Endothelial cell of umbilical vein (primary cell): ENCODE measurements at regions of chr1 and their contacts with region 1.

Region 1: GRCh38 chr1:151008190-151008860 is at the start of gene PRUNE1:
- DNase-seq: peak; percentile 98
- H3K4me3 ChIP-seq: peak within 1 kb of the TSS; percentile 7 to 82 (median 52)
- H3K27ac ChIP-seq: peak within 1 kb of the TSS; percentile 88
- H3K4me1 ChIP-seq: peaks cover 28% of the 10 kb centered on the region
- H3K27me3 ChIP-seq: no peaks in the 10 kb centered on the region
- CTCF ChIP-seq: no peak
- POLR2A ChIP-seq: no peak
- total RNA-seq, gene PRUNE1: 8.0 and 8.6 TPM in 2 replicates

Region 2: GRCh38 chr1:150979092-150980056 is 29.0 kb before region 1 on chr1:
- CTCF ChIA-PET with region 1: interaction called, 278 read pairs
- POLR2A ChIA-PET with region 1: interaction called, 3 read pairs
- dilution Hi-C with region 1: no loop called
- intact Hi-C with region 1: loop called (anchors 1 kb)
- DNase-seq: peak; percentile 91
- H3K4me3 ChIP-seq: no peak overlapping the region
- H3K27ac ChIP-seq: no peak overlapping the region
- H3K4me1 ChIP-seq: peaks cover 22% of the 10 kb centered on the region
- H3K27me3 ChIP-seq: no peaks in the 10 kb centered on the region
- CTCF ChIP-seq: peak; percentile 100
- POLR2A ChIP-seq: no peak

Region 3: DNA sequence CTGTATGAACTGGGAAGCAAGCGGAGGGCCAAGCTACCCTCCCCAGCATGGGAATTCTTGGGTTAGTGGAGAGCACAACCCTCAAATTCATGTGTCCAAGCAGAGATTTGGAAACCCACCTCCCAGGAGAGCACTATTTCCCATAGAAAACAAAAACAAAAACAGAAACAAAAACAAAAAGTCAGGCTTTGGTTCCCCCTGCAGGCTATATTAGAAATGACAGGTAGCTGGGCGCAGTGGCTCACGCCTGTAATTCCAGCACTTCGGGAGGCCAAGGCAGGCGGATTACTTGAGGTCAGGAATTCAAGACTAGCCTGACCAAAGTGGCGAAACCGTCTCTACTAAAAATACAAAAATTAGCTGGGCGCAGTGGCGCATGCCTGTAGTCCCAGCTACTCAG is 12.4 kb before region 1 on chr1:
- CTCF ChIA-PET with region 1: interaction called, 127 read pairs
- POLR2A ChIA-PET with region 1: interaction called, 4 read pairs
- dilution Hi-C with region 1: no loop called
- intact Hi-C with region 1: no loop called
- DNase-seq: no peak
- H3K4me3 ChIP-seq: no peak overlapping the region
- H3K27ac ChIP-seq: no peak overlapping the region
- H3K4me1 ChIP-seq: peaks cover 11% of the 10 kb centered on the region
- H3K27me3 ChIP-seq: no peaks in the 10 kb centered on the region
- CTCF ChIP-seq: peak; percentile 57 to 68
- POLR2A ChIP-seq: no peak

Region 4: DNA sequence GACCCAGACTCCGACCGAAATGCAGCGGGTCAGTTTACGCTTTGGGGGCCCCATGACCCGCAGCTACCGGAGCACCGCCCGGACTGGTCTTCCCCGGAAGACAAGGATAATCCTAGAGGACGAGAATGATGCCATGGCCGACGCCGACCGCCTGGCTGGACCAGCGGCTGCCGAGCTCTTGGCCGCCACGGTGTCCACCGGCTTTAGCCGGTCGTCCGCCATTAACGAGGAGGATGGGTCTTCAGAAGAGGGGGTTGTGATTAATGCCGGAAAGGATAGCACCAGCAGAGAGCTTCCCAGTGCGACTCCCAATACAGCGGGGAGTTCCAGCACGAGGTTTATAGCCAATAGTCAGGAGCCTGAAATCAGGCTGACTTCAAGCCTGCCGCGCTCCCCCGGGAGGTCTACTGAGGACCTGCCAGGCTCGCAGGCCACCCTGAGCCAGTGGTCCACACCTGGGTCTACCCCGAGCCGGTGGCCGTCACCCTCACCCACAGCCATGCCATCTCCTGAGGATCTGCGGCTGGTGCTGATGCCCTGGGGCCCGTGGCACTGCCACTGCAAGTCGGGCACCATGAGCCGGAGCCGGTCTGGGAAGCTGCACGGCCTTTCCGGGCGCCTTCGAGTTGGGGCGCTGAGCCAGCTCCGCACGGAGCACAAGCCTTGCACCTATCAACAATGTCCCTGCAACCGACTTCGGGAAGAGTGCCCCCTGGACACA is 39.8 kb after region 1 on chr1:
- CTCF ChIA-PET with region 1: interaction called, 5 read pairs
- POLR2A ChIA-PET with region 1: no interaction called
- dilution Hi-C with region 1: no loop called
- intact Hi-C with region 1: loop called (anchors 1 kb)
- DNase-seq: peak; percentile 84
- H3K4me3 ChIP-seq: peak overlapping the region; percentile 66 to 76 (median 73)
- H3K27ac ChIP-seq: peak overlapping the region; percentile 26
- H3K4me1 ChIP-seq: peaks cover 8% of the 10 kb centered on the region
- H3K27me3 ChIP-seq: no peaks in the 10 kb centered on the region
- CTCF ChIP-seq: peak; percentile 40 to 74
- POLR2A ChIP-seq: peak; percentile 65

Region 5: DNA sequence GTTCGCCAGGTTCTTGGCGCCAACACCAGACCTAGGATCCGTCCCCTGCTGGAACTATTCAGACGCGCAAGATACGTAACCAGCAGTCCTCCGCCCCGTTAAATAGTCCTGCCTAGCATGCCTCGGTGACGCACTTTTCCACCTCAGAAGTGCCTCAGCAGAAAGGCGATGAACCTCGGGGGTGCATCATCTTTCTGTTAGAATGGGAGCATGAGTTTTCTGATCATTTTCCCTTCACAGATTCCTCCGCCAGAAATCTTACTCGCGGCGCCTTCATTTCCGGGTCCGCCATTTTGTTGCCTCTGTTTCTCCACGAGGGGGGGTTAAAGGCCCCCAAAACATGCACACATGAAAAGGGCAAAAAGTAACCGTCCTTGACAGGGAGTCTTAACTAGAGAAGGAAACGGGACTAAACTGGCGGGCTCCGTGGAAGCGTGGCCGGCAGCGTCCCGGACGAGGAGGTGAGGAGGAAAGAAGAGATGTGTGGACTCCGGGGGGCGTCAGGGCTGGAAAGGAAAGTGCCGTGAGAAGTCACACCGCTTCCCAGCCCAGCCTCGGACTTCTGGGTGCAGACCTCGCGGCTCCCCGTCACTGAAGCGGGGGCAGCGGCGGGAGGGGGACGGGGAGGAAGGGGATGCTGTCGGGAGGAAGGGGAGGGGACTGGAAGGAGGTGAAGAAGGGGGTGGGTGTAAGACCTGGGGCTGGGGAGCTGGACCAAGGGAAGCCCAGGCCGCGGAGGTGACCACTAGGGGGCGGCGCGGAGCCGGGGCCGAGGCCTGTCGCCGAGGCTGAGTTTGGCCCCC is 62.4 kb after region 1 on chr1 and contains the start of gene GABPB2:
- CTCF ChIA-PET with region 1: interaction called, 4 read pairs
- POLR2A ChIA-PET with region 1: interaction called, 3 read pairs
- dilution Hi-C with region 1: no loop called
- intact Hi-C with region 1: loop called (anchors 1 kb)
- DNase-seq: peak; percentile 95
- H3K4me3 ChIP-seq: peak within 1 kb of the TSS; percentile 44 to 73 (median 62)
- H3K27ac ChIP-seq: peak within 1 kb of the TSS; percentile 80
- H3K4me1 ChIP-seq: no peaks in the 10 kb centered on the region
- H3K27me3 ChIP-seq: no peaks in the 10 kb centered on the region
- CTCF ChIP-seq: peak; percentile 79 to 99
- POLR2A ChIP-seq: no peak
- total RNA-seq, gene GABPB2: 4.3 and 5.0 TPM in 2 replicates